Posterior vena cava (tissue), 2 donors: ENCODE measurements at regions of chr16 and their contacts with region 1.

Region 1: DNA sequence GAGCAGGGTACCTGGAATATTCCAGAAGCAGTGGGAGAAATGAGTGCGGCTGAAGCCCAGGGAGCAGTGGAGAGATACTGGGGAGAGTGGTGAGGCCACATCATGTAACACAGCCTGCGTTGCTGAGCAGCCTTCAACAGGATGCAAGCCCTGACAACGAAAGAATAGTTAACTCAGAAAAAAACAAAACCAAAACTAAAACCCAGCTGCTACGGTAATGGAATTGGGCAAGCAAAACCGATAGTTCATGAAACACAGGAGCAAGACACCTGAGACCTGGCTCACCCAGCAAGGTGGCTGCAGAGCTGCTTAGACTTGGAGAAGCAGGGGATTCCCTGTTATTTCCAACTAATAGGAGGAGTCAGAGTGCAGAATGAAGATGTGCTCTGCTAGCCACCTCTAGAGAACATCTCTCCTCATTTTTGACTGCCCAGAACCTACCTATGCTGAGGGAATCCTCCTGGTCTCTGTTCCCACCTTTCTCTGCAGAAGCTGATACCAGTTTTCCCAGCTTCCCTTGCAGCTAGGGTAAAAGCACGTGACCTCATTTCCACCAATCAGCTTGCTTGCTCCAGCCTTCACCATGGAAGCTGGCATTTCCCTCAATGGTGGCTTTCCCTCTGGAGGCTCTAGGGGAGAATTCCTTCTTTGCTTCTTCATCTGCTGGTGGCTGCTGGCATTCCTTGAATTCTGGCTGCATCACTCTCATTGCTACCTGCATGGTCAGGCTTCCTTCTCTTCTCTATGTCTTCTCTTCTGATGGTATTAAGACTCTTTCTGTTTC is 59.4 kb upstream of the XYLT1 start:
- DNase-seq: no peak

Region 2: DNA sequence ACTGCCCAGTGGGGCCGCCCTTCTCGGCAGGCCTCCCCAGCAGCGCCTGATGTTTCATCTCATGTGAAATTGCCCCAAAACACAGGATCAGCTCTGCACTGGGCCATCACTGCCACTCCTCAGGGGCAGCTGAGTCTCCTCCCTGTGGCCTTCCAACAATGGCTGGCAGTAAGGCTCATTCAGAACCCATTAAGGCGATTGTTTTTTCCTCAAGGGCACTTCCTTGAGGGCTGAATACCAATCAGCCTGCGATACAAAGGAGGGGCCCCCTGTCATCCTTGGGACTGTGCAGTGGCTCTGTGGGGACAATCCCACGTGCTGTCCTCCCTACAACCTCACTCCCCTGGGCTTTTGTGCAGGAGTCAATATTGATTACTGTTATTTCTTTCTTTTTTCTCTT is 107.0 kb before region 1 on chr16:
- intact Hi-C with region 1: loop called in 1 of 2 experiments (anchors 5 kb)
- DNase-seq: no peak

Region 3: GRCh38 chr16:17556276-17557052 is 26.3 kb after region 1 on chr16:
- intact Hi-C with region 1: no loop called
- DNase-seq: no peak